ENCODE measurements at regions of chr18 and their contacts with region 1.

Region 1: GRCh38 chr18:22933206-22933957 is at the start of gene RBBP8:
- DNase-seq: peak; percentile 33 to 88
- H3K4me3 ChIP-seq: peak within 1 kb of the TSS; percentile 80 to 86
- H3K27ac ChIP-seq: peak within 1 kb of the TSS; percentile 94 to 97
- H3K4me1 ChIP-seq: peaks cover 0 to 4% of the 10 kb centered on the region in 2 donors
- H3K27me3 ChIP-seq: no peaks in the 10 kb centered on the region
- CTCF ChIP-seq: no peak
- total RNA-seq, gene RBBP8: 1.9 TPM

Region 2: DNA sequence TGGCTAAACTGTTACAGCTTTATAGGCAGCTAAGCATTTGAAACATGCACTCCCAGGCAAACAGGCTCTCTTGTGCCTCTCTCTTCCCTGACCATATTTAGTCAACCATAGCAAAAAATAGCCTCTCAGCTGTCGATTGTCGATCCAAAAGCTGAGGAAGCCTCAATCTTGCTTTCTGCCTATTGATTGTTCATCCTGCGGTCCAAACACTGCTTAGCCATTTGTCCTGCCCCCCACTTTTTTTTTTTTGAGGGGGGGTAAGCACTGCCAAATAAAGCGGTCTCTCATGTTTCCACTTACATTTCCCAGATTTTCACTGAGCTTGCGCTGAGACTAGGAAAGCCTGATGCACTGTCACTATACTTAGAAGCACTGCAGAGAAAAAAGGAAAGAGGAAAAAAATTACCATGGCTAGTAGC is 1102.0 kb before region 1 on chr18:
- intact Hi-C with region 1: loop called (anchors 1 kb)
- DNase-seq: peak; percentile 26 to 85
- H3K4me3 ChIP-seq: peak overlapping the region; percentile 18 to 55
- H3K27ac ChIP-seq: peak overlapping the region; percentile 67 to 77
- H3K4me1 ChIP-seq: peaks cover 0 to 20% of the 10 kb centered on the region in 2 donors
- H3K27me3 ChIP-seq: no peaks in the 10 kb centered on the region
- CTCF ChIP-seq: no peak

Region 3: DNA sequence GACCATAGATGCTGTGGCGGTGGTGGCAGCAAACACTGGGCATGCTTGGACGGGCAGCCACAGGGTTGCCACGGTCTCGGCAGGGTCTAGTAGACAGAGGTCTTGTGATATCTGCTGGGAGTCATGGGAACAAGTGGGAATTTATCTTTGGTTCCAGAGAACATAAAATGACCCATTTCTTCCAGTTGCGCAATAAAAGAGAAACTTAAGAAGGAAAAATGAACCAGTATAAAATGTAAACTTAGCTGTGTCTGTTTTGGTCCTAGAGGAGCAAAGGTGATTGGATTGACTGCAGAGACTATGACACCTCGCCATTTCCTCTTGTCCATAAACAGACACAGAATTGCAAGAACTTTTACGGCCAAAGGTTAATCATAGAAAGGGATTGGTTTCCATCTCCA is 132.8 kb before region 1 on chr18:
- intact Hi-C with region 1: loop called (anchors 5 kb)
- DNase-seq: no peak
- H3K4me3 ChIP-seq: no peak overlapping the region
- H3K27ac ChIP-seq: peak overlapping the region; percentile 29 to 44
- H3K4me1 ChIP-seq: peaks cover 0 to 13% of the 10 kb centered on the region in 2 donors
- H3K27me3 ChIP-seq: no peaks in the 10 kb centered on the region
- CTCF ChIP-seq: no peak

Region 4: GRCh38 chr18:22983175-22983574 is 49.8 kb after region 1 on chr18:
- intact Hi-C with region 1: loop called (anchors 5 kb)
- DNase-seq: no peak
- H3K4me3 ChIP-seq: no peak overlapping the region
- H3K27ac ChIP-seq: no peak overlapping the region
- H3K4me1 ChIP-seq: no peaks in the 10 kb centered on the region
- H3K27me3 ChIP-seq: no peaks in the 10 kb centered on the region
- CTCF ChIP-seq: peak in 2 of 3 experiments; percentile 38 to 58

Region 5: GRCh38 chr18:23071285-23071684 is 137.9 kb after region 1 on chr18:
- intact Hi-C with region 1: no loop called
- DNase-seq: peak; percentile 27 to 68
- H3K4me3 ChIP-seq: no peak overlapping the region
- H3K27ac ChIP-seq: no peak overlapping the region
- H3K4me1 ChIP-seq: no peaks in the 10 kb centered on the region
- H3K27me3 ChIP-seq: no peaks in the 10 kb centered on the region
- CTCF ChIP-seq: no peak

Region 6: GRCh38 chr18:23493654-23494053 is 560.3 kb after region 1 on chr18:
- intact Hi-C with region 1: no loop called
- DNase-seq: no peak
- H3K4me3 ChIP-seq: no peak overlapping the region
- H3K27ac ChIP-seq: no peak overlapping the region
- H3K4me1 ChIP-seq: peaks cover 0 to 9% of the 10 kb centered on the region in 2 donors
- H3K27me3 ChIP-seq: no peaks in the 10 kb centered on the region
- CTCF ChIP-seq: no peak